ENCODE measurements at regions of chr16 and their contacts with region 1.

Region 1: GRCh38 chr16:87324411-87325275 is 7.5 kb upstream of the C16orf95 start:
- DNase-seq: peak in 3 of 7 donors; percentile 28 to 42 (median 40)
- H3K4me3 ChIP-seq: no peak overlapping the region
- H3K27ac ChIP-seq: peak overlapping the region in 1 of 5 donors; percentile 50
- H3K4me1 ChIP-seq: peaks cover 4 to 17% of the 10 kb centered on the region in 2 donors
- H3K27me3 ChIP-seq: no peaks in the 10 kb centered on the region
- CTCF ChIP-seq: peak; percentile 57 to 74 (median 66)
- POLR2A ChIP-seq: no peak

Region 2: GRCh38 chr16:86914876-86915717 is 409.5 kb before region 1 on chr16:
- intact Hi-C with region 1: no loop called
- DNase-seq: no peak
- H3K4me3 ChIP-seq: no peak overlapping the region
- H3K27ac ChIP-seq: no peak overlapping the region
- H3K4me1 ChIP-seq: no peaks in the 10 kb centered on the region
- H3K27me3 ChIP-seq: peaks cover 3% of the 10 kb centered on the region
- CTCF ChIP-seq: no peak
- POLR2A ChIP-seq: no peak

Region 3: DNA sequence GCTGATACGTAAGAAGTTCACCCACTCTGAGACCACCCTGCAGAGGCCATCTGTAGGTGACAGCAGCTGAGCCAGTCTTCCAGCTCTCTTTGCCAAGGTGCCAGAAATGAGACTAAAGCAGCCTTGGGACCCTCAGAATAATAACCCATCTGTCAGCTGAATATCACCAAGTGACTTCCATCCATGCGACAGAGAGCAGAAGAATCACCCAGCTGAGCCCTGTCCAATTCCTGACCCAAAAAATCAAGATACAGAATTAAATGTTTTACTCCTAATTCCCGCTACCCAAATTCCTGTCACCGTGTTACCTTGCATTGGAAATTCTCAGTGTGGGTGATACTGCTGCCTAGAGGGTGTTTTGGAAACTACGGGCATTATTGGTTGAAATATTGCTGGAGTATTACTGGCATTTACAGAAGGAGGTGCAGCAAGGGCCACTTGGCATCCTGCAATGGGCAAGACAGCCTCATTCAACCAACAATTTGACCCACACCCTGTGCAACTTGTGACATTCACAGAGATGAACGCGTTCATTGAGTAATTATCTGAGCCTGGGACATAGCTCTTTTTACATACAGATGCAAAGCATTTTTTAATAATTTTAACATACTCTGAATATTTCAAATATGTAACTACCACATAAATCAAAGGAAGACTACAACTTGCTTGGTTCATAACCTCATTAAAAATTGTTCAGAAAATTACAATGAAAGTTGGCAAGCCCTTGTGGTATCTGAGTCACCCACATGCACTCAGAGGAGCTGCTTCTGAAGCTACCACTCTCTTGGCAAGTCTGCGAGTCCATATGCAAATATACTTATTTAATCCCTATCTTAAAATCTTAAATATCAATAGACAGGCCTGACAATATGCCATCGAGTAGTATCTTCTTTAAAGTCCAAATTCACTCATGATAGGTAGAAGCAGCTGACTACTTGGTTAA is 134.1 kb before region 1 on chr16:
- intact Hi-C with region 1: no loop called
- DNase-seq: no peak
- H3K4me3 ChIP-seq: no peak overlapping the region
- H3K27ac ChIP-seq: no peak overlapping the region
- H3K4me1 ChIP-seq: no peaks in the 10 kb centered on the region
- H3K27me3 ChIP-seq: no peaks in the 10 kb centered on the region
- CTCF ChIP-seq: no peak
- POLR2A ChIP-seq: no peak

Region 4: GRCh38 chr16:87383629-87384161 is 59.1 kb after region 1 on chr16 and contains the start of gene FBXO31:
- intact Hi-C with region 1: loop called in 1 of 2 experiments (anchors 5 kb)
- DNase-seq: peak; percentile 85 to 93 (median 89)
- H3K4me3 ChIP-seq: peak within 1 kb of the TSS; percentile 10 to 89 (median 50)
- H3K27ac ChIP-seq: peak within 1 kb of the TSS; percentile 65 to 96 (median 88)
- H3K4me1 ChIP-seq: peaks cover 44 to 58% of the 10 kb centered on the region in 2 donors
- H3K27me3 ChIP-seq: no peaks in the 10 kb centered on the region
- CTCF ChIP-seq: no peak
- POLR2A ChIP-seq: peak; percentile 91 to 98
- total RNA-seq, gene FBXO31: 19.2 to 106 (median 76.0) TPM